CD8-positive, alpha-beta T cell (primary cell): ENCODE measurements at regions of chr19 and their contacts with region 1.

Region 1: GRCh38 chr19:18594096-18594823 is 5.7 kb downstream of the REX1BD start:
- DNase-seq: peak; percentile 47 to 87 (median 74)
- ATAC-seq: peak; percentile 79
- H3K4me3 ChIP-seq: peak overlapping the region; percentile 38 to 79
- H3K4me3 Mint-ChIP-seq: peak overlapping the region; percentile 76
- H3K27ac ChIP-seq: peak overlapping the region in 1 of 2 experiments; percentile 31
- H3K27ac Mint-ChIP-seq: peak overlapping the region; percentile 55
- H3K4me1 ChIP-seq: peaks cover 34% of the 10 kb centered on the region
- H3K4me1 Mint-ChIP-seq: peaks cover 28% of the 10 kb centered on the region
- H3K27me3 ChIP-seq: peaks cover 0 to 4% of the 10 kb centered on the region in 2 experiments
- H3K27me3 Mint-ChIP-seq: peaks cover 5% of the 10 kb centered on the region
- CTCF ChIP-seq: peak; percentile 78

Region 2: GRCh38 chr19:17539238-17540117 is 1054.8 kb before region 1 on chr19:
- CTCF ChIA-PET with region 1: no interaction called
- POLR2A ChIA-PET with region 1: no interaction called
- intact Hi-C with region 1: loop called in 1 of 2 experiments (anchors 5 kb)
- DNase-seq: peak; percentile 83 to 99 (median 96)
- ATAC-seq: peak; percentile 99
- H3K4me3 ChIP-seq: peak overlapping the region; percentile 56 to 63
- H3K4me3 Mint-ChIP-seq: peak overlapping the region; percentile 90
- H3K27ac ChIP-seq: peak overlapping the region; percentile 28 to 37
- H3K27ac Mint-ChIP-seq: peak overlapping the region; percentile 78
- H3K4me1 ChIP-seq: peaks cover 8% of the 10 kb centered on the region
- H3K4me1 Mint-ChIP-seq: peaks cover 11% of the 10 kb centered on the region
- H3K27me3 ChIP-seq: no peaks in the 10 kb centered on the region
- H3K27me3 Mint-ChIP-seq: no peaks in the 10 kb centered on the region
- CTCF ChIP-seq: no peak

Region 3: DNA sequence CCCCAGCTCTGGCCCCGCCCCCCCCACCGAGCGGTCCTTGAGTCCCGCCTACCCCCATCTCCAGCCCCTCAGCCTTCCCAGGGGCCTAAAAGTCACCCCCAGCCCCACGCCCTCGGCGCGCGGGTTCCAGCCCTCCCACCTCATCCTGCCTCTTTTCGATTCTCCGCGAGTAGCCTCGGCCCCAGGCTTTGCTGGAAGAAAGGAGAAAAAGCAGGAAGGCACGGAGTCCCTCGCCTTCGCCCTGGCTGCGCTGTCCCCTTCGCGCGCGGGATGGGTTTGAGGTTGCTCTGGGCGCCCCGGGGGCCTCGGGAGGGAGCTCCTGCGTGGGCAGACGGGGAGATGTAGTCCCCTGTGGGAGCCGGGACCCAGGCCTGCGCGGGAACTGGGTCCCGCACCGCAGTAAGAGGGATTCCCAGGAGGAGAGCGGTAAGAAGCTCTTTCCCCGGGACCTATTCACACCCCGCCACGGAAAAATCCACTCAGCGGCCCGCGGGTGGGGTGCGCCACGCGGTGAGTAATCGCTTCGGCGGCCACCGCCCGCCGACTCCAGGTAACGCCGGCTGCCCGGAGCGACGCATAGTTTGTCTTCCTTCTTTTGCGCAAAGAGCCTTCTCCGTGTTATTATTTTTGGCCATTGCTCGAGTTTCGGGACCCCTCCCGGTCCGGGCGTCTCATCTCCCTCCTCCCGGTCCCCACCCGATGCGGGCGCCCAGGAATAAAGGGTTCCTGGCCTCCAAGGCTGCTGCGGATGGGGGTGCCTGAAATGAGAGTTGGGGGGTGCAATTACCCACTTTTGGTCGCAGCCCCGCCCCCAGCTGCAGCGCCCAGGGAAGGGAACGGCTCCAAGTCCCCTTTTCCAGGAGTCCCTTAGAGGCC is 13.2 kb after region 1 on chr19:
- CTCF ChIA-PET with region 1: interaction called, 4 read pairs
- POLR2A ChIA-PET with region 1: interaction called, 6 read pairs
- intact Hi-C with region 1: loop called in 1 of 2 experiments (anchors 2 kb)
- DNase-seq: no peak
- ATAC-seq: no peak
- H3K4me3 ChIP-seq: no peak overlapping the region
- H3K4me3 Mint-ChIP-seq: no peak overlapping the region
- H3K27ac ChIP-seq: no peak overlapping the region
- H3K27ac Mint-ChIP-seq: no peak overlapping the region
- H3K4me1 ChIP-seq: peaks cover 16% of the 10 kb centered on the region
- H3K4me1 Mint-ChIP-seq: peaks cover 26% of the 10 kb centered on the region
- H3K27me3 ChIP-seq: peaks cover 58 to 70% of the 10 kb centered on the region in 2 experiments
- H3K27me3 Mint-ChIP-seq: peaks cover 65% of the 10 kb centered on the region
- CTCF ChIP-seq: no peak

Region 4: DNA sequence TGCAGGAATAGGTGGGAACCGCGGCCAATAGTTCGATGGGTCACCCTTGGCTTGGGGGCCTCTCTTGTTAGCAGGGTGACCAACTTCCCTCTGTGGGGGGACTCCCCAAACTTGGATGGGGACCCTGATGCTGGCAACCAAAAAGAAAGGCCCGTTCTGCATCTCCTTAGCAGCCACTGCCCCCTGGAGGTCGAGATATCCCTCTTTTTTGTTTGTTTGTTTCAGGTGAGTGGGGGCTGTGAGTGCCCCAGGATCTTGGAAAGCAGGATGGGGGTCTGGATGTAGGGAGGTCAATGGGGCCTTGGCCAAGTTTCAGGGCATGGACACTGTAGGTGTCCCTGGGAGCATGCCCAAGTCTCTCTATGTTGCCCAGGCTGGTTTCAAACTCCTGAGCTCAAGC is 81.5 kb after region 1 on chr19:
- CTCF ChIA-PET with region 1: interaction called, 5 read pairs
- POLR2A ChIA-PET with region 1: no interaction called
- intact Hi-C with region 1: loop called in 1 of 2 experiments (anchors 2 kb)
- DNase-seq: peak in 4 of 9 experiments; percentile 22 to 50 (median 29)
- ATAC-seq: no peak
- H3K4me3 ChIP-seq: no peak overlapping the region
- H3K4me3 Mint-ChIP-seq: no peak overlapping the region
- H3K27ac ChIP-seq: no peak overlapping the region
- H3K27ac Mint-ChIP-seq: no peak overlapping the region
- H3K4me1 ChIP-seq: no peaks in the 10 kb centered on the region
- H3K4me1 Mint-ChIP-seq: no peaks in the 10 kb centered on the region
- H3K27me3 ChIP-seq: no peaks in the 10 kb centered on the region
- H3K27me3 Mint-ChIP-seq: no peaks in the 10 kb centered on the region
- CTCF ChIP-seq: no peak

Region 5: GRCh38 chr19:18846862-18847548 is 252.7 kb after region 1 on chr19:
- CTCF ChIA-PET with region 1: interaction called, 126 read pairs
- POLR2A ChIA-PET with region 1: interaction called, 7 read pairs
- intact Hi-C with region 1: loop called (anchors 1 kb)
- DNase-seq: peak; percentile 37 to 81 (median 73)
- ATAC-seq: peak; percentile 65
- H3K4me3 ChIP-seq: no peak overlapping the region
- H3K4me3 Mint-ChIP-seq: peak overlapping the region; percentile 36
- H3K27ac ChIP-seq: no peak overlapping the region
- H3K27ac Mint-ChIP-seq: no peak overlapping the region
- H3K4me1 ChIP-seq: peaks cover 40% of the 10 kb centered on the region
- H3K4me1 Mint-ChIP-seq: peaks cover 56% of the 10 kb centered on the region
- H3K27me3 ChIP-seq: no peaks in the 10 kb centered on the region
- H3K27me3 Mint-ChIP-seq: no peaks in the 10 kb centered on the region
- CTCF ChIP-seq: peak; percentile 78

Region 6: GRCh38 chr19:18865973-18866799 is 271.9 kb after region 1 on chr19:
- CTCF ChIA-PET with region 1: interaction called, 6 read pairs
- POLR2A ChIA-PET with region 1: no interaction called
- intact Hi-C with region 1: loop called in 1 of 2 experiments (anchors 1 kb)
- DNase-seq: peak in 8 of 9 experiments; percentile 40 to 75 (median 62)
- ATAC-seq: peak; percentile 80
- H3K4me3 ChIP-seq: no peak overlapping the region
- H3K4me3 Mint-ChIP-seq: no peak overlapping the region
- H3K27ac ChIP-seq: no peak overlapping the region
- H3K27ac Mint-ChIP-seq: no peak overlapping the region
- H3K4me1 ChIP-seq: peaks cover 4% of the 10 kb centered on the region
- H3K4me1 Mint-ChIP-seq: peaks cover 5% of the 10 kb centered on the region
- H3K27me3 ChIP-seq: peaks cover 0 to 4% of the 10 kb centered on the region in 2 experiments
- H3K27me3 Mint-ChIP-seq: peaks cover 3% of the 10 kb centered on the region
- CTCF ChIP-seq: peak; percentile 87

Region 7: GRCh38 chr19:19203012-19203856 is 609.0 kb after region 1 on chr19 and contains the start of gene NR2C2AP:
- CTCF ChIA-PET with region 1: no interaction called
- POLR2A ChIA-PET with region 1: no interaction called
- intact Hi-C with region 1: no loop called
- DNase-seq: peak; percentile 79 to 96 (median 93)
- ATAC-seq: peak; percentile 95
- H3K4me3 ChIP-seq: peak within 1 kb of the TSS; percentile 78 to 96
- H3K4me3 Mint-ChIP-seq: peak within 1 kb of the TSS; percentile 91
- H3K27ac ChIP-seq: peak within 1 kb of the TSS; percentile 65 to 80
- H3K27ac Mint-ChIP-seq: peak within 1 kb of the TSS; percentile 90
- H3K4me1 ChIP-seq: peaks cover 27% of the 10 kb centered on the region
- H3K4me1 Mint-ChIP-seq: peaks cover 28% of the 10 kb centered on the region
- H3K27me3 ChIP-seq: peaks cover 0 to 5% of the 10 kb centered on the region in 2 experiments
- H3K27me3 Mint-ChIP-seq: peaks cover 3% of the 10 kb centered on the region
- CTCF ChIP-seq: no peak
- total RNA-seq, gene NR2C2AP: 9.5 to 12.5 TPM